Colonic mucosa (tissue), 4 donors: ENCODE measurements at regions of chr3 and their contacts with region 1.

Region 1: GRCh38 chr3:160038862-160039562 is 50.4 kb downstream of the IL12A start:
- DNase-seq: no peak
- H3K4me3 ChIP-seq: no peak overlapping the region
- H3K27ac ChIP-seq: no peak overlapping the region
- H3K4me1 ChIP-seq: no peaks in the 10 kb centered on the region
- H3K27me3 ChIP-seq: peaks cover 4% of the 10 kb centered on the region
- CTCF ChIP-seq: no peak

Region 2: GRCh38 chr3:160210799-160211221 is 171.8 kb after region 1 on chr3:
- intact Hi-C with region 1: loop called (anchors 10 kb)
- DNase-seq: no peak
- H3K4me3 ChIP-seq: no peak overlapping the region
- H3K27ac ChIP-seq: no peak overlapping the region
- H3K4me1 ChIP-seq: no peaks in the 10 kb centered on the region
- H3K27me3 ChIP-seq: no peaks in the 10 kb centered on the region
- CTCF ChIP-seq: no peak

Region 3: GRCh38 chr3:160343132-160343531 is 304.1 kb after region 1 on chr3:
- intact Hi-C with region 1: loop called (anchors 10 kb)
- DNase-seq: no peak
- H3K4me3 ChIP-seq: no peak overlapping the region
- H3K27ac ChIP-seq: no peak overlapping the region
- H3K4me1 ChIP-seq: no peaks in the 10 kb centered on the region
- H3K27me3 ChIP-seq: no peaks in the 10 kb centered on the region
- CTCF ChIP-seq: peak; percentile 19